A673 (cell line): ENCODE measurements at regions of chr3 and their contacts with region 1.

Region 1: GRCh38 chr3:160372780-160373179 is 26.2 kb downstream of the IFT80 start:
- DNase-seq: no peak
- H3K4me3 ChIP-seq: no peak overlapping the region
- H3K27ac ChIP-seq: no peak overlapping the region
- H3K4me1 ChIP-seq: no peaks in the 10 kb centered on the region
- H3K27me3 ChIP-seq: no peaks in the 10 kb centered on the region
- CTCF ChIP-seq: no peak

Region 2: GRCh38 chr3:160434071-160434470 is 61.3 kb after region 1 on chr3:
- CTCF ChIA-PET with region 1: no interaction called
- POLR2A ChIA-PET with region 1: interaction called, 10 read pairs
- intact Hi-C with region 1: no loop called
- DNase-seq: no peak
- H3K4me3 ChIP-seq: no peak overlapping the region
- H3K27ac ChIP-seq: no peak overlapping the region
- H3K4me1 ChIP-seq: no peaks in the 10 kb centered on the region
- H3K27me3 ChIP-seq: no peaks in the 10 kb centered on the region
- CTCF ChIP-seq: no peak